Natural killer cell (primary cell): ENCODE measurements at regions of chr4 and their contacts with region 1.

Region 1: DNA sequence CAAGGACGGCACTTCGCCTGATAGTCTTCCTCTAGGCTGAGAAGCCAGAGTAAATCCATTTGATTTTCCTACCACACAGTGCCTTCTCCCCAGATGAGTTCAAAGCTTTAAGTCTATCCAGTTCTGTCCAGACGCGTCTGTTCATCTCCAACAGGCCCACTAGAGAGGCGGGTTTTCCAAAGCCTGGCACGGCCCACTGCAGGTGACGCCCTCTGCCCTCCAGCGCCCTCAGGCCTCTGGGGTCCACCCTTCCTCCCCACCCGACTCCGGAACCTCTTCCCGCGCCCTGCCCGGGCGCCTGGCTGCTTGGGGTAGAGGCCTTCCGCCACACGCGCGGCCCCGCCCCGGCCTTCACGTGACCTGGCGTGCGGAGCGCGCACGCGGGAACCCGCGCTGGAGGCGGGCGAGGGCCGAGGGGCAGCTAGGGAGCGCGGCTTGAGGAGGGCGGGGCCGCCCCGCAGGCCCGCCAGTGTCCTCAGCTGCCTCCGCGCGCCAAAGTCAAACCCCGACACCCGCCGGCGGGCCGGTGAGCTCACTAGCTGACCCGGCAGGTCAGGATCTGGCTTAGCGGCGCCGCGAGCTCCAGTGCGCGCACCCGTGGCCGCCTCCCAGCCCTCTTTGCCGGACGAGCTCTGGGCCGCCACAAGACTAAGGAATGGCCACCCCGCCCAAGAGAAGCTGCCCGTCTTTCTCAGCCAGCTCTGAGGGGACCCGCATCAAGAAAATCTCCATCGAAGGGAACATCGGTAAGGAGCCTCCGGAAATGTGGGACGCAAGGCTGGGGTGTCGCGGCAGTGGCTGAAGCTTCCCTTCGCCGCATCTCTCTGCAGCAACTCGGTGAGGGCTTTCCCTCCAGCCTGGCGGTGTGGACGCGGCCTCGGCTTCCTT is at the start of gene DCK:
- DNase-seq: peak; percentile 89 to 92
- ATAC-seq: peak; percentile 83 to 97 (median 90)
- H3K4me3 ChIP-seq: peak within 1 kb of the TSS; percentile 99
- H3K4me3 Mint-ChIP-seq: peak within 1 kb of the TSS; percentile 95
- H3K27ac ChIP-seq: peak within 1 kb of the TSS; percentile 82
- H3K27ac Mint-ChIP-seq: peak within 1 kb of the TSS; percentile 87 to 90
- H3K4me1 ChIP-seq: peaks cover 20% of the 10 kb centered on the region
- H3K4me1 Mint-ChIP-seq: peaks cover 52 to 55% of the 10 kb centered on the region in 2 donors
- H3K27me3 ChIP-seq: no peaks in the 10 kb centered on the region
- H3K27me3 Mint-ChIP-seq: no peaks in the 10 kb centered on the region
- CTCF ChIP-seq: no peak
- total RNA-seq, gene DCK: 28.3 to 32.7 (median 29.5) TPM

Region 2: DNA sequence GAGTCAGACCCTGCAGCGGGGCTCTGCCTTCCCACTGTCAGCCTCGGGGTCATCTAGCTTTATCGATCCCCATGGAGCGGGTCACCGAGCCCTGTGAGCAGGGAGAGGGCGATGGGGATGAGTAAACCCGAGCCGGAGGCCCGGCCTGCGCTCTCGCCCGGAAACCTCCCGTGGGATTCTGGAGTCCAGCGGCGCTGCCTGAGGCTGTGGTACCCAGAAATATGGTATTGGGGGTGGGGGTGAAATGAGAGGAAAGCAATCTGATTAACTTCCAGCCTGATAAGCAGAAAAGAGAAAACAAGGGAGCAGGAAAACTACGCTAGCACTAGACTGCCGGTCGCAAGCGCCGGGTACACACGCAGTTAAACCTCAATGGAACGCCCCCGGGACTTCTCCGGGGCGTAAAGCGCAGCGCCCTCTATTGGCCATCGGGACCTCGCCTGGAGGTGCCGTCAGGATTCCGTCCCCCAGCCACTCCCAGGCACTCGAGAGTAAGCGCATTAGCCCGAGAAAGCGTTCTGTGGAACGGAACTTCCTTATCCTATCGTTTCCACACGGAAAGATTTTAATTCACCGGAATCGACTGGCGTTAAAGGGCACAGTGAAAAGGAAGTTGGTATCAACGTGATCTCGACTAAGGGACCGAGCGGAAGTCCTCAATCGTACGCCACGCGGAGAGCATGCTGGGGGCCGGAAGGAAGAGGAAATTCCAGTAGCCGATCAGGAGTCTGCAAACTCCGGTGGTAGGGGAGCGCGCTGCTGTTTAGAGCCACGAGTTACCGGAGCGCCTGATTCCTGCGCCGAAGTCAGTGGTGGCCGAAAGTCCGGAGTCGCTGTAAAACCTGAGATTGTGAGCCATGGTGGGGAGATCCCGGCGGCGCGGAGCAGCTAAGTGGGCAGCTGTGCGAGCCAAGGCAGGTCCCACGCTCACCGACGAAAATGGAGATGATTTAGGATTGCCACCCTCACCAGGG is 305.3 kb before region 1 on chr4 and contains the start of gene UTP3:
- intact Hi-C with region 1: loop called (anchors 10 kb)
- DNase-seq: peak; percentile 85 to 98
- ATAC-seq: peak; percentile 85 to 96 (median 89)
- H3K4me3 ChIP-seq: peak within 1 kb of the TSS; percentile 93
- H3K4me3 Mint-ChIP-seq: peak within 1 kb of the TSS; percentile 100
- H3K27ac ChIP-seq: peak within 1 kb of the TSS; percentile 97
- H3K27ac Mint-ChIP-seq: peak within 1 kb of the TSS; percentile 99
- H3K4me1 ChIP-seq: peaks cover 25% of the 10 kb centered on the region
- H3K4me1 Mint-ChIP-seq: peaks cover 33 to 36% of the 10 kb centered on the region in 2 donors
- H3K27me3 ChIP-seq: no peaks in the 10 kb centered on the region
- H3K27me3 Mint-ChIP-seq: peaks cover 0 to 2% of the 10 kb centered on the region in 2 donors
- CTCF ChIP-seq: peak; percentile 97
- total RNA-seq, gene UTP3: 22.3 to 23.1 (median 22.6) TPM

Region 3: GRCh38 chr4:70839589-70840093 is 153.8 kb before region 1 on chr4 and contains the start of gene GRSF1:
- intact Hi-C with region 1: loop called (anchors 1 kb)
- DNase-seq: peak; percentile 89 to 97
- ATAC-seq: peak; percentile 88 to 97 (median 88)
- H3K4me3 ChIP-seq: peak within 1 kb of the TSS; percentile 46
- H3K4me3 Mint-ChIP-seq: peak within 1 kb of the TSS; percentile 98
- H3K27ac ChIP-seq: peak within 1 kb of the TSS; percentile 80
- H3K27ac Mint-ChIP-seq: peak within 1 kb of the TSS; percentile 95 to 97
- H3K4me1 ChIP-seq: peaks cover 23% of the 10 kb centered on the region
- H3K4me1 Mint-ChIP-seq: peaks cover 20 to 27% of the 10 kb centered on the region in 2 donors
- H3K27me3 ChIP-seq: no peaks in the 10 kb centered on the region
- H3K27me3 Mint-ChIP-seq: no peaks in the 10 kb centered on the region
- CTCF ChIP-seq: no peak
- total RNA-seq, gene GRSF1: 33.4 to 50.8 (median 43.0) TPM

Region 4: DNA sequence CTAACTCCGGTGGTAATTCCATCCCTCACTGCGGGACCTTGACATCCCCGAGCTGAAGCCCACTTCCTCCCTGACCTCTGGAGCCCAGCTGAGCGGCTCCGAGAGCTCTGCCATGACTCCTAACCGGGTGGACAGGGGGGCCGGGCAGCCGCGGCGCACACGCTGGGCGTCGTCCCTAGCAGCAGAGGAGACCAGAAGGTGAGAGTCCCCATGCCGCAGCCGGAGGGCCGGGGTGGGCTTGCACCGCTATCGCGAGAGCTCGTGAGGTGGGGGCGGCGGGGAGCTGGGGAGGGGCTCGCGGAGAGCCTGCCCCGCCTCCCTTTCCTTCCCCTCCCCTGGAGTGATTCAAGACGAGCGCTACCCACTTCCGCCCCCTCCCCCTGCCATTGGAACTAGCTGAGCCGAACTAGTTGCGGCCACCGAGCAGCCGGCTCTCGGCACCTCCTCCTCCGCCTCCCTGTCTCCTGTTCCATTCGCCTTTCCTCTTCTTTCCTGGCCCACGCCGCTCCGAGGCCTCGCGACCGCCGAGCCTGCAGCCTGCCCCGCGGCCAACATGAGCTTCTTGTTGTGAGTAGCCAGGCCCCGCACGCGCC is 91.3 kb before region 1 on chr4 and contains the start of gene MOB1B:
- intact Hi-C with region 1: loop called (anchors 5 kb)
- DNase-seq: peak; percentile 60 to 88
- ATAC-seq: peak; percentile 93 to 97 (median 95)
- H3K4me3 ChIP-seq: peak within 1 kb of the TSS; percentile 99
- H3K4me3 Mint-ChIP-seq: peak within 1 kb of the TSS; percentile 96
- H3K27ac ChIP-seq: peak within 1 kb of the TSS; percentile 58
- H3K27ac Mint-ChIP-seq: peak within 1 kb of the TSS; percentile 72 to 92
- H3K4me1 ChIP-seq: peaks cover 12% of the 10 kb centered on the region
- H3K4me1 Mint-ChIP-seq: peaks cover 30 to 34% of the 10 kb centered on the region in 2 donors
- H3K27me3 ChIP-seq: no peaks in the 10 kb centered on the region
- H3K27me3 Mint-ChIP-seq: no peaks in the 10 kb centered on the region
- CTCF ChIP-seq: no peak
- total RNA-seq, gene MOB1B: 15.1 to 23.6 (median 22.6) TPM

Region 5: DNA sequence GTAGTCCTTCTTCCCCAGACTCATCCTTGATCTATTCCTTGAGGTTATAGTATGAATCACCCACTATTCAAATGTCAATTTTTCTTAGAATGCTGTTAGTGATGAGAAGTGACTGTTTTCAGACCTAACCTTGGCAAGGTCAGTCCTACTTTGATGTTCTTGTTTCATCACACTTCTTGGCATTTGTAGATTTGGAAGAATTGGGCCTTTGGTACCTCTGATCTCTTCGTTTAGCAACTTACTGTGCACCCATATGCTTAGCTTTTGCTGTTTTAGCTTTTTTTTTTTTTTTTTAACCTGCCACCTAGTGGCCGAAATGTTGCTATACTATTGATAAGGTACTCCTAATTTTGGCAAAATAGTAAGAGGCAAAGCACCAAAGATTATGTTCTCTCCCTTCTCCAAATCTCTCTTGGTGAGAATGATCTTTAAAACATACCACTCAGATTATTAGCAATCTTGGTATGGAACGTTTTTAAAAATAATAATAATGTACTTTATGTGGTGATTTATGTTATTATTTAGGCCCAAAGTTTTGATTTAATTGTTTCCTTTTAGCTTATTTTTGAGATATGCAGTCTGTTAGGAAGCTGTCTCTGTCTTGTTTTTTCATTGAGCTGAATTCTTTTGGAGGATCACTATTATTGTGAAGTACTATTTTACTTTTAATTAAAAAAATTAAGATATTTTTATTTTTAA is 16.6 kb after region 1 on chr4:
- intact Hi-C with region 1: loop called (anchors 2 kb)
- DNase-seq: peak in 1 of 2 donors; percentile 75
- ATAC-seq: peak in 2 of 3 donors; percentile 76
- H3K4me3 ChIP-seq: no peak overlapping the region
- H3K4me3 Mint-ChIP-seq: no peak overlapping the region
- H3K27ac ChIP-seq: no peak overlapping the region
- H3K27ac Mint-ChIP-seq: peak overlapping the region; percentile 71 to 77
- H3K4me1 ChIP-seq: peaks cover 14% of the 10 kb centered on the region
- H3K4me1 Mint-ChIP-seq: peaks cover 48 to 55% of the 10 kb centered on the region in 2 donors
- H3K27me3 ChIP-seq: no peaks in the 10 kb centered on the region
- H3K27me3 Mint-ChIP-seq: no peaks in the 10 kb centered on the region
- CTCF ChIP-seq: peak; percentile 88

Region 6: DNA sequence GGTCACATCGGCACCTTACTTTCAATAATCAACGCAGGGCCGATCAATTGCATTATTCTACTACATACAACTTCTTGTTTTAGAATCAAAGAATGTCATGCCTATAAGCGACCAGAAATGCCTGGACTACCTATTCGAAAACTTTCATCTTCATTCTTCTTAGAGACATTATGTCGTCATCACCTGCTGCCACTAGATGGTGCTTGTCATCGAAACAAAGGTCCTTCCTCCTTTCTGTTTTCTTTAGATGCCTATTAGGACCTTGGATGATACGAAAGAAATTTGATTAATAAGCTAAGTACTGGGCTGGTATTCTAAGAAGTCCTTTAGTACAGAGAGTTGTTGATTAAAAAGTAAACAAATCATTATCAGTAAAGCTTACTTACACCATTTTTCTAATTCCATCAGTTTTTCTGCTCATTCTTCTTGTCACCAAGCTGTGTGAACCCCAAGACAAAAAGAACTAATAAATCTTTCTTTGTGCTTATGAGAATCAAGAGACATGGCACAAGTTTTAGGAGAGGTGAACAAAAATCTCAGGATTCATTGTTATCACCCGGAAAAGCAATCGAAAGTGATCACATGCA is 190.9 kb after region 1 on chr4:
- intact Hi-C with region 1: loop called (anchors 2 kb)
- DNase-seq: peak in 1 of 2 donors; percentile 75
- ATAC-seq: peak in 2 of 3 donors; percentile 26 to 33
- H3K4me3 ChIP-seq: no peak overlapping the region
- H3K4me3 Mint-ChIP-seq: peak overlapping the region; percentile 71
- H3K27ac ChIP-seq: no peak overlapping the region
- H3K27ac Mint-ChIP-seq: peak overlapping the region; percentile 64 to 88
- H3K4me1 ChIP-seq: peaks cover 9% of the 10 kb centered on the region
- H3K4me1 Mint-ChIP-seq: peaks cover 34 to 35% of the 10 kb centered on the region in 2 donors
- H3K27me3 ChIP-seq: no peaks in the 10 kb centered on the region
- H3K27me3 Mint-ChIP-seq: no peaks in the 10 kb centered on the region
- CTCF ChIP-seq: peak; percentile 72